Motor neuron (in vitro differentiated cells): ENCODE measurements at regions of chr15 and their contacts with region 1.

Region 1: GRCh38 chr15:88440021-88440420 is 27.2 kb downstream of the MRPL46 start:
- ATAC-seq: peak in 2 of 8 experiments; percentile 57 to 72
- H3K4me3 ChIP-seq: no peak overlapping the region
- H3K27ac ChIP-seq: no peak overlapping the region
- H3K4me1 ChIP-seq: no peaks in the 10 kb centered on the region

Region 2: DNA sequence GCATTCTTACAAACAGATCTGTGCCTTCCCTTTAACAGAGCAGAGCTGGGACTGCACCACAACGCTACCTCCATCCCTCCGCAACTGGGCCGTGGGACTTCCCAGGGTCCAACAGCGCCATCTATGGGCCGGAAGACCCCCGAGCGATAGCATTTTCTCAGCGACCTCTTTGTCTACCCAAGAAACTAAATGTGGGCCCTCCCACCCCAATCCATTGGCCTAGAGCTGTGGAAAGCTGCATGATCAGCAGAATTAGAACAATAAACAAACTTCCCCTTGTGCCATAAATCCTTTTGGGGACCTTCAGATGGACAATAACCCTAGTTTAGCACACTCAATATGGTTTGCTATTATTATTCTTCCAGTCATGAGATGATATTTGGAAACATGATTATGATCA is 108.7 kb before region 1 on chr15:
- in situ Hi-C with region 1: loop called in 1 of 9 experiments (anchors 25 kb)
- ATAC-seq: peak in 3 of 8 experiments; percentile 58 to 88 (median 78)
- H3K4me3 ChIP-seq: no peak overlapping the region
- H3K27ac ChIP-seq: no peak overlapping the region
- H3K4me1 ChIP-seq: no peaks in the 10 kb centered on the region

Region 3: GRCh38 chr15:88649753-88650551 is 209.9 kb after region 1 on chr15:
- in situ Hi-C with region 1: no loop called
- ATAC-seq: peak in 5 of 8 experiments; percentile 3 to 33 (median 23)
- H3K4me3 ChIP-seq: no peak overlapping the region
- H3K27ac ChIP-seq: no peak overlapping the region
- H3K4me1 ChIP-seq: peaks cover 6 to 13% of the 10 kb centered on the region in 2 donors

Region 4: DNA sequence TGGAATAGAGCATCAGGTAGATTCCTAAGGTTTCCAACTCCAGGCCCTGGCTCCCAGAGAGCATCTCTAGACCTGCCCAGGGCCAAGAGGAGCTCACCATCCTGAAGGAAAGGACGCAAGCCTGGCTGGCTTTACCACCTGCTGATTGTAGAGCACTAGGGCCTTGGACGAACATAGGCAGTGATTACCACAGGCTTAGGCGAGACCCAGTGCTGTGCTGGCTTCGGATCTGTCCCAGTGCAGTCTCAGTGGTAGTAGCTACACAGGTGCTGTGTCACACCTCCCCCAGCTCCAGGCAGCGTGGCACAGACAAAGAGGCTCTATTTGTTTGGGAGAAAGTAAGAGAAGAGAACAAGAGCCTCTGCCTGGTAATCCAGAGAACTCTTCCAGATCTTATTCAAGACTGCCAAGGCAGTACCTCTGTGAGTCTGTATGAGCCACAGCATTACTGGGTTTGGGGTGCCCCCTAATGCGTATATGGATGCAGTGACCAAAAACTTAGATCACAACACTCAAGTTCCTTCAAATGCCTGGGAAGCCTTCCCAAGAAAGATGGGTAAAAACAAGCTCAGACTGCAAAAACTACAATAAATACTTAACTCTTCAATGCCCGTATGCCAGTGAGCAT is 224.2 kb after region 1 on chr15:
- in situ Hi-C with region 1: no loop called
- ATAC-seq: no peak
- H3K4me3 ChIP-seq: no peak overlapping the region
- H3K27ac ChIP-seq: no peak overlapping the region
- H3K4me1 ChIP-seq: no peaks in the 10 kb centered on the region